BJ (cell line): ENCODE measurements at regions of chr10 and their contacts with region 1.

Region 1: DNA sequence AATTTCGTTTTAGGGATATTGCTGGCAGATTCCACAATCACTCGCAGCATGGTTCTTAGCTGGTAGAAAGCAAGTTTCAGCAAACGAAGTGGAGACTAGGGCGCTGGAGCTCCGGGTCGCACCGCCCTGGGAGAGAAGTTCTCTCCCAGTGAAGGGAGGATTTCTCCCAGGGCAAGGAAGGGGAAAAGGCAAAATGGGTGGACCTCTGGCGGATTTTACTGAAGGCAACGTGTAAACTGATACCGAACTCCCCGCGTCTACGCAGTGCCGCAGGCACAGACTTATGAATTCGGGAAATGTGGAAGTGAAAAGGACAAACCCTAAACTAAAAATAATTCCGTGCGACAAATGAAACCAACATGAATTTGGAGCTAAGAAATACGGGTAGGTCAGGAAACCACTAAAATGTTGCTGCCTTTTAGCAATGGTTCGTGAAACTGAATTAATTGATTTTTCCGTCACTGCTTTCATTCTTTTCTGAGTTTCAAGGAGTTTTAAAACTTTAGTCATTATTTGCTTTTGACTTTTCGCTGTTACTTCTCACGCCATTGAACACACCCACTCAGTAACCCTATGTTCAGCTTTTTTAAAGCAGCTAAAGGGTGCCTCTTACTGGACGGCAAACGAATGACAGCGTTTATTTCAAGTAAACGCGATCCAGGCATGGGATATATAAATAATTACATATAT is at the start of gene MYOF:
- DNase-seq: peak; percentile 91
- H3K4me3 ChIP-seq: peak within 1 kb of the TSS; percentile 72
- H3K27me3 ChIP-seq: no peaks in the 10 kb centered on the region
- CTCF ChIP-seq: peak; percentile 54
- polyA plus RNA-seq, gene MYOF: 355 and 425 TPM in 2 replicates

Region 2: GRCh38 chr10:93386631-93387369 is 95.5 kb before region 1 on chr10:
- CTCF ChIA-PET with region 1: interaction called, 45 read pairs
- POLR2A ChIA-PET with region 1: interaction called, 9 read pairs
- DNase-seq: no peak
- H3K4me3 ChIP-seq: no peak overlapping the region
- H3K27me3 ChIP-seq: no peaks in the 10 kb centered on the region
- CTCF ChIP-seq: peak; percentile 37

Region 3: GRCh38 chr10:93458821-93459257 is 23.5 kb before region 1 on chr10:
- CTCF ChIA-PET with region 1: interaction called, 20 read pairs
- POLR2A ChIA-PET with region 1: interaction called, 3 read pairs
- DNase-seq: peak; percentile 100
- H3K4me3 ChIP-seq: no peak overlapping the region
- H3K27me3 ChIP-seq: no peaks in the 10 kb centered on the region
- CTCF ChIP-seq: no peak

Region 4: GRCh38 chr10:93471110-93471651 is 11.1 kb before region 1 on chr10:
- CTCF ChIA-PET with region 1: interaction called, 20 read pairs
- POLR2A ChIA-PET with region 1: interaction called, 13 read pairs
- DNase-seq: peak; percentile 98
- H3K4me3 ChIP-seq: no peak overlapping the region
- H3K27me3 ChIP-seq: no peaks in the 10 kb centered on the region
- CTCF ChIP-seq: no peak